GM12878 (cell line): ENCODE measurements at regions of chr15 and their contacts with region 1.

Region 1: DNA sequence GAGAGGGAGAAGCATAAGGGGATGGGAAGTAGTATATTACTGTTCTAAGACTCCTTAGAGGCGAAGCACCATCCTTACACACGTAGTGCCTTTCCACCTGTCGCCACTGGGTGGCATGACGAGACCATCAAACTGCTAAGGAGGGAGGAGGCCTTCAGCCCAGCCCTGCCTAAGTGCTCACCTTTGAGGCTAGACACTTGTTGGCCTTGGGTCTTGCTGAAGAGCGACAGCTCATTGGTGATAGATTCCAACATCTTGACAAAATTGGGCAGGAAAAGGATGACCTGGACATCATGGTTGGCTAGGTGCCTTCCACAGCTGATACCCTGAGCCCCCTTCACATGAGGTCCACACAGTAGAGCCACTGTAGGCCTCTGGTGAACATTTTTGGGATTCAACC is 19.6 kb downstream of the CLK3 start:
- DNase-seq: no peak
- ATAC-seq: peak; percentile 91
- H3K4me3 ChIP-seq: no peak overlapping the region
- H3K27ac ChIP-seq: no peak overlapping the region
- H3K4me1 ChIP-seq: no peaks in the 10 kb centered on the region
- H3K27me3 ChIP-seq: no peaks in the 10 kb centered on the region
- CTCF ChIP-seq: peak; percentile 89 to 98 (median 95); a peak in 5 of 6 replicates
- EP300 ChIP-seq: no peak
- POLR2A ChIP-seq: 0 out of 2 replicates have a peak, but pooled peaks have one; percentile 12
- RAD21 ChIP-seq: peak; percentile 95

Region 2: GRCh38 chr15:74615508-74616365 is 19.5 kb before region 1 on chr15 and contains the start of gene CLK3:
- CTCF ChIA-PET with region 1: interaction called, 206 read pairs
- POLR2A ChIA-PET with region 1: interaction called, 6 read pairs
- RAD21 ChIA-PET with region 1: interaction called, 5 read pairs
- SMC1A ChIA-PET with region 1: interaction called, 10 read pairs
- in situ Hi-C with region 1: no loop called
- intact Hi-C with region 1: no loop called
- DNase-seq: peak; percentile 79
- ATAC-seq: peak; percentile 89
- H3K4me3 ChIP-seq: peak within 1 kb of the TSS; percentile 89
- H3K27ac ChIP-seq: peak within 1 kb of the TSS; percentile 97
- H3K4me1 ChIP-seq: peaks cover 17% of the 10 kb centered on the region
- H3K27me3 ChIP-seq: no peaks in the 10 kb centered on the region; a peak in 1 of 4 replicates
- CTCF ChIP-seq: no peak
- EP300 ChIP-seq: peak in 1 of 2 experiments; percentile 11; a peak in 1 of 4 replicates
- POLR2A ChIP-seq: peak; percentile 75
- RAD21 ChIP-seq: no peak
- polyA plus RNA-seq, gene CLK3: 3.3 to 5.8 TPM

Region 3: GRCh38 chr15:74758736-74759135 is 123.5 kb after region 1 on chr15:
- CTCF ChIA-PET with region 1: interaction called, 380 read pairs
- POLR2A ChIA-PET with region 1: no interaction called
- RAD21 ChIA-PET with region 1: interaction called, 4 read pairs
- SMC1A ChIA-PET with region 1: interaction called, 15 read pairs
- in situ Hi-C with region 1: no loop called
- intact Hi-C with region 1: no loop called
- DNase-seq: no peak
- ATAC-seq: no peak
- H3K4me3 ChIP-seq: no peak overlapping the region
- H3K27ac ChIP-seq: no peak overlapping the region
- H3K4me1 ChIP-seq: 0 out of 2 replicates have a peak, but pooled peaks cover 3% of the 10 kb centered on the region
- H3K27me3 ChIP-seq: no peaks in the 10 kb centered on the region
- CTCF ChIP-seq: no peak
- EP300 ChIP-seq: no peak
- POLR2A ChIP-seq: no peak
- RAD21 ChIP-seq: no peak

Region 4: DNA sequence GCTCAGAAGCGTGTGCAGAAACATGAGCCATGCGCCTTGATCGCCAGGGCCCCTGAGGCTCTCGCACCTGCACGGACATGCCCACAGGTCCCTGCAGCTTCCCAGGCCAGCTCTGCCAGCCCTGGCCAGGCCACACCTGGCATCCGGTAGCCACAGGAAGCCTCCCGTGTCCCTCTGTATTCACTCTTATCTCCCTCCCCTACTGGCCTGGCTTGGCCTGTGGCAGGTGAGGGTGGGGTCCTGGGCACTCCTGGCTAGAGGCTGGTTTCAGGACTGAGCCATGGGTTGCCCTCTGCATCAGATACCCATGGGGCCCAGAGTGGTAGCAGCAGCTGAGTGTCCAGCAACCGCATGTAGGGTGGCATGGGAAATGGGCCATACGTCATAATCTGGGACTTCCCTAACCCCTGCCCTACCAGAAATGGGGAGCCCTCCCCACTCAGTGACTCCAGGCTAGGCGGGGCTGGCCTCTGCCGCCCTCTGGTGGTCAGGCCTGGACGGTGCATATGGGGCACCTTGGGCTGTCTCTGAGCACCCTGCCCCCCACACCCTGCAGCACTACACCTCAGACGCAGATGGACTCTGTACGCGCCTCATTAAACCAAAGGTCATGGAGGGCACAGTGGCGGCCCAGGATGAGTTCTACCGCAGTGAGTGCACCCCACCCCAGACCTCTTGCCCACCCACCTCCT is 164.8 kb after region 1 on chr15:
- CTCF ChIA-PET with region 1: interaction called, 6 read pairs
- POLR2A ChIA-PET with region 1: interaction called, 6 read pairs
- RAD21 ChIA-PET with region 1: no interaction called
- SMC1A ChIA-PET with region 1: interaction called, 7 read pairs
- in situ Hi-C with region 1: no loop called
- intact Hi-C with region 1: loop called (anchors 1 kb)
- DNase-seq: peak; percentile 76
- ATAC-seq: peak; percentile 94
- H3K4me3 ChIP-seq: no peak overlapping the region
- H3K27ac ChIP-seq: peak overlapping the region; percentile 39
- H3K4me1 ChIP-seq: peaks cover 38% of the 10 kb centered on the region
- H3K27me3 ChIP-seq: no peaks in the 10 kb centered on the region
- CTCF ChIP-seq: peak; percentile 97 to 99 (median 99); a peak in 5 of 6 replicates
- EP300 ChIP-seq: 0 out of 4 replicates have a peak, but pooled peaks of 1 of the 2 experiments have one; percentile 60
- POLR2A ChIP-seq: peak; percentile 69
- RAD21 ChIP-seq: peak; percentile 93

Region 5: GRCh38 chr15:74950078-74951000 is 315.1 kb after region 1 on chr15:
- CTCF ChIA-PET with region 1: interaction called, 69 read pairs
- POLR2A ChIA-PET with region 1: no interaction called
- RAD21 ChIA-PET with region 1: interaction called, 10 read pairs
- SMC1A ChIA-PET with region 1: interaction called, 8 read pairs
- in situ Hi-C with region 1: loop called (anchors 5 kb)
- intact Hi-C with region 1: loop called (anchors 2 kb)
- DNase-seq: peak; percentile 53
- ATAC-seq: peak; percentile 93
- H3K4me3 ChIP-seq: no peak overlapping the region
- H3K27ac ChIP-seq: no peak overlapping the region
- H3K4me1 ChIP-seq: no peaks in the 10 kb centered on the region; the same call in none of the 2 replicates
- H3K27me3 ChIP-seq: no peaks in the 10 kb centered on the region
- CTCF ChIP-seq: peak; percentile 99 to 100 (median 99); a peak in 5 of 6 replicates
- EP300 ChIP-seq: no peak
- POLR2A ChIP-seq: no peak
- RAD21 ChIP-seq: peak; percentile 99